Gastrocnemius medialis (tissue), 4 donors: ENCODE measurements at regions of chr19 and their contacts with region 1.

Region 1: DNA sequence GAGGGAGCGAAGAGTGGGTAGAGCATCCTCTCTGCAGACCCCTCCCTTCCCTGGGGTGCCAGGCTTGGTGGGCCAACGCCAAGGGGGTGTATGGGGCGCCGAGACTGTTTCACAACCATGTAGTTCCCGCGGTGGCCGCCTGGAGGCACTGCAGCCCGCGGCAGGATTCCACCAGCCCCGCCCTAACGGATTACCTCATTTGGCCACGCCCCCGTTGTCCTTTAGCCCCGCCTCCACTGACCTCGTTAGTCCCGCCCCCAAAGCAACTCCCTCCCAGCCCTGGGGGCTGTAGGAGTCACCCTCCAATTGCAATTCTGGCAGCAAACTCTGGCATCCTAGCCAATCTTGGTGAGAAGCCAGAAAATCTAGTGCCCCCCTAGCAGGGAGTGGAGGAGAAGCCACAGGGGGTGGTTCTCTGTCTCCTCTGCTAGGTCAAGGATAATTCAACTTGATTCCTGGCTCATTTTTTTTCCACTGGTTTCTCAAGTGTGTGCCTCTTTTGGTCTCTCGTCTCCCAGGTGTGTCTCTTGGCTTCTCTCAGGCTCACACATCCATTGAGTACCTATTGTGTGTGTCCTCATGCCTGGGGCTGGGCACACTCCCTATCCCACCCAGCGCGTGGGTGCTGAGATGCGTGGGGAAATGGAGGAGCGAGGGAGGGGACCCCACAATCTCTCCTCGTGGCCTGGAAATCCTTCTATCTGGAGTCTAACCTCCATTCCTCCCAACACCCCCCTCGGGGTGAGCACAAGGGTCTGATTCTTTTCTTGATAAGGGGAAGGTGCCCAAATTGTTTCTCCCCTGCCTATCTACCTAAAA is 2.0 kb downstream of the OLFM2 start:
- DNase-seq: peak; percentile 32 to 46
- ATAC-seq: peak; percentile 62 to 69
- H3K4me3 ChIP-seq: no peak overlapping the region
- H3K27ac ChIP-seq: no peak overlapping the region
- H3K4me1 ChIP-seq: peaks cover 3 to 15% of the 10 kb centered on the region in 2 donors
- H3K27me3 ChIP-seq: peaks cover 21 to 37% (median 34%) of the 10 kb centered on the region in 3 donors
- CTCF ChIP-seq: peak; percentile 66 to 76 (median 70)
- POLR2A ChIP-seq: no peak

Region 2: DNA sequence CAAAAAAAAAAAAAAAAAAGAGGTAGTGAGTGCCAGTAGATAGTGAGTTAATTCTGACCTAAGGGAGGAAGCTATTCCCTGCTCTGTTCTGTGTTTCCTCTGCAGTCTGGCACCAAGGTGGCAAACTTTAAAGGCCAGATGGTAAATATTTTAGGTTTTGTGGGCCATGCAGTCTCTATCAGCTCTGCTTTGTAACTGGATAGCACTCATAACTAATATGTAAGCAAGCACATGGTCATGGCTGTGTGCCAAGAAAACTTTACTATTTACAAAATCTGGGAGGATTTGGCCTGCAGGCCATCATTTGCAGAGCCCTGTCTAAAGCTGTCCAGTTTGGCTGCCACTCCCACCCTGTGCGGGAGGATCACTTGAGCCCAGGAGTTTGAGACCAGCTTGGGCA is 94.9 kb before region 1 on chr19:
- in situ Hi-C with region 1: no loop called
- intact Hi-C with region 1: no loop called
- DNase-seq: no peak
- ATAC-seq: no peak
- H3K4me3 ChIP-seq: no peak overlapping the region
- H3K27ac ChIP-seq: no peak overlapping the region
- H3K4me1 ChIP-seq: peaks cover 12 to 16% of the 10 kb centered on the region in 2 donors
- H3K27me3 ChIP-seq: no peaks in the 10 kb centered on the region
- CTCF ChIP-seq: no peak
- POLR2A ChIP-seq: no peak

Region 3: GRCh38 chr19:10000171-10000826 is 66.0 kb after region 1 on chr19:
- in situ Hi-C with region 1: no loop called
- intact Hi-C with region 1: loop called (anchors 2 kb)
- DNase-seq: peak; percentile 17 to 25
- ATAC-seq: no peak
- H3K4me3 ChIP-seq: no peak overlapping the region
- H3K27ac ChIP-seq: peak overlapping the region in 1 of 4 donors; percentile 14
- H3K4me1 ChIP-seq: no peaks in the 10 kb centered on the region
- H3K27me3 ChIP-seq: no peaks in the 10 kb centered on the region
- CTCF ChIP-seq: peak; percentile 9 to 60 (median 30)
- POLR2A ChIP-seq: no peak

Region 4: DNA sequence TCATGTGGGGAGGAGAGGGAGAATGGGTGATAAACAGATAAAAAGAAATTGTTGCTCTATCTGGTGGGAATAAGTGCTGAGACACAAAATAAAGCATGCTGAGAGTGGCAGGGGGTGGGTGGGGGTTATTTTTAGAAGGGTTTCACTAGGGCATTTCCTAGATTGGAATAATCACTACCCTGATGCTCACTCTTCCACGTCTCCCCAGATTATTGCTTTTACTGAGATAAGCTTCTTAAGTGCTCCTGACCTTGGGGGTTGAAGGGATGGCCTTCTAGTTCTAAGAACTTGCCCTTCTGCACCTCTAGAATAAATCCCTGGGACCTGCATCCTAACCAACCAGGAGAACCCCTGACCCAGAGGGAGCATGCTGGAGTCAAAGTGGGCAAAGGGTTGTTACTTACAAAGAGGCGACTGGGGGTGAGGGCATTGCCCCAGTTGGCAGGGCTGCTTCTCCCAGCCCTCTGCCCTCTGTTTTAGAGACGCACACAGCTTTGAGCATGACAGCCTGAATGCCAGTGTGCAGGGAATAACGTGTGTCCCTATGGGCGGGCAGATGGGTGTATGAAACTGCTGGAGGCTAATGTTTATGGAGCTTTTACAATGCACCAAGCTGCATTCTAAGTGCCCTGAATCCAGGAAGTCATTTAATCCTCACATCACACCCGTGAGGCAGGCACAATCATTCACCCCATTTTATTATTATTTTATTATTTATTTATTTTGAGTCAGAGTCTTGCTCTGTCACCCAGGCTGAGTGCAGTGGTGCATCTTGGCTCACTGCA is 79.7 kb after region 1 on chr19:
- in situ Hi-C with region 1: no loop called
- intact Hi-C with region 1: no loop called
- DNase-seq: no peak
- ATAC-seq: no peak
- H3K4me3 ChIP-seq: no peak overlapping the region
- H3K27ac ChIP-seq: no peak overlapping the region
- H3K4me1 ChIP-seq: no peaks in the 10 kb centered on the region
- H3K27me3 ChIP-seq: peaks cover 0 to 20% (median 20%) of the 10 kb centered on the region in 3 donors
- CTCF ChIP-seq: no peak
- POLR2A ChIP-seq: no peak

Region 5: DNA sequence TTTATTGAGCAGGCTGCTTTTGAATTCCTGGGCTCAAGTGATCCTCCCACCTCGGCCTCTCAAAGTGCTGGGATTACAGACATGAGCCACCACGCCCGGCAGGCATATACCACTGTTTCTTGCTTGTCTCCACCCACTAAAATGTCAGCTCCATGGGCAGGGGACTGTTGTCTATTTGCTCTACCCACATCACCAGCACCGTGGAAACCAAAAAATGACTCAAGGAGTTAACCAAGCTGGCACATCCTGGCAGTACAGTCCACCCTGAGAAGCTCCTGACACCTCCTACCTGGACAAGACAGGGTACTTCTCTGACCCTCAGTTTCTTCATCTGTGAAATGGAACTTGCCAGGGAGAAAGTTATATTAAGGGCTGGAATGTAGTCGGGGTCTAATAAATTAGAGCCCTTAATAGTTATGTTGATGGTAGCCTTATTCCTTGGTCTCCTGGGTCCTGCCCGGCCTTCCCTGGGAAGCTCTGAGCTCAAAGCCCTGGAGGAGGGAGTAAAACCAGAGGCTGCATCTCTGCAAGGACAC is 92.9 kb after region 1 on chr19:
- in situ Hi-C with region 1: loop called in 1 of 4 experiments (anchors 5 kb)
- intact Hi-C with region 1: loop called (anchors 1 kb)
- DNase-seq: no peak
- ATAC-seq: no peak
- H3K4me3 ChIP-seq: no peak overlapping the region
- H3K27ac ChIP-seq: no peak overlapping the region
- H3K4me1 ChIP-seq: no peaks in the 10 kb centered on the region
- H3K27me3 ChIP-seq: peaks cover 0 to 3% (median 0%) of the 10 kb centered on the region in 3 donors
- CTCF ChIP-seq: no peak
- POLR2A ChIP-seq: no peak

Region 6: DNA sequence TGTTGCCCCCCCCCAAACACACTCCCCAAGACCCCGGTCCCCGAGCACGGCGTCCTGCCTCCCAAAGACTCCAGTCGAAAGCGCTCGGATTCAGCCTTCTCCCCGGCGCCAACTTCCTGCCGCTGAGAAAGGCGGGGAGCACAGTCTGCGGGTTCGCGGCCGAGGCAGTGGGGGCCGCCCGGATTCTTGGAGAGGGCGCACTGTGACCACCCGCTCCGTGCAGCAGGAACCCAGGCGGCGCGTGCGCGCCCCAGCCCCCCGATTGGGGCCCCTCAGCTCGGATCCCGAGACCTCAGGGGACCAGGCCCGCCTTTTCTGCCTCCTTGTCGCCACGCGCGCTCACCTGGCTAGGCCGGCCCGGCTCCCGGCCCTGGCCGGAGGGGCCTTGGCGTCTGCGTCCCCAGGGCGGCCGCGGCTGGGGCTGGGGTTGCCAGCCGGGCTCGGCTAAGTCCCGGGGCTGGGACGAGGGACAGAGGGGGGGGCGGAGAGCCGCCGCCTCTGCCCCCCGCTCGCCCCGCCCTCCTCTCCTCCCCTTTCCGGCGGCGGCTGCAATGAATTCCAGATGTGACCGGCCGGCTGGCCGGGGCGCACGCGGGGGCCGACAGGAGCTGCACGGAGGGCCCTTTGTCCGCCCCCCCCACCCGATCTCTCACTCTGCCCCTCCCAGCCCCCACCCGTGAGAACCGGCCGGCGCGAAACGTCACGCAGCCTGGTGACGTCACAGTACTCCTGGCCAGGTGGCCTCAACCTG is 296.7 kb after region 1 on chr19 and contains the start of gene S1PR2:
- in situ Hi-C with region 1: loop called in 2 of 4 experiments (anchors 25 kb)
- intact Hi-C with region 1: no loop called
- DNase-seq: peak; percentile 20 to 38
- ATAC-seq: peak in 1 of 2 donors; percentile 25
- H3K4me3 ChIP-seq: peak within 1 kb of the TSS; percentile 69 to 87 (median 76)
- H3K27ac ChIP-seq: peak within 1 kb of the TSS; percentile 70 to 84 (median 79)
- H3K4me1 ChIP-seq: peaks cover 3 to 13% of the 10 kb centered on the region in 2 donors
- H3K27me3 ChIP-seq: peaks cover 8 to 25% (median 19%) of the 10 kb centered on the region in 3 donors
- CTCF ChIP-seq: no peak
- POLR2A ChIP-seq: peak in 1 of 2 donors; percentile 6
- total RNA-seq, gene S1PR2: 0.56 to 2.2 (median 1.1) TPM

Region 7: DNA sequence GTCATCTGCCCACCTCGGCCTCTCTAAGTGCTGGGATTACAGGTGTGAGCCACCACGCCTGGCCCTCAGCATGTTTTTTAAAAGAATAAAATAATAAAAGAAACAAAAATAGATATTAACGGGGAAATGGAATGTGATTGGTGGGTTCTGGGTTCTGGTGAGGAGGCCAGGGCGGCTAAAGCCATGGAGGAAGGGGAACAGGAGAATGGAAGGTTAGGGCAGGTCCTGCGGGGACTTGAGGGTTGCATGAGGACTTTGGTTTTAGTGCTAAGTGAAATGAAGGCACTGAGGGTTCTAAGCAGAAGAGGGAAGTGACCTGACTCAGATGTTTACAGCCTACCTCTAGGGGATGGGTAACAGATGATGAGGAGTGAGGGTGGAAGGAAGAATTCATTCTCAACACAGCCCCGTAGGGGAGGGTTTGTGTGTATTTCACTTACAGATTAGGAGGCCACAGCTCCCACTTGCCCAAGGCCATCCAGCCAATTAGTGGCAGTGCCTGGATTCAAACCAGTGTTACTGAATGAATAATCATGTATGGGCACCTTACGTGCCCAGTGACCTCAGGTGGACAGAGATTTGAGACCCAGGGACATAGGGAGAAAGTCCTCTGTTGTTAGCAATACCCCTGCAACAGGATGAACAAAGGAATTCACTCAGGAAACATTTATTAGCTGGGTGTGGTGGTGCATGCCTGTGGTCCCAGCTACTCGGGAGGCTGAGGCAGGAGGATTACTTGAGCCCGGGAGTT is 311.0 kb after region 1 on chr19:
- in situ Hi-C with region 1: loop called (anchors 10 to 25 kb)
- intact Hi-C with region 1: loop called (anchors 10 kb)
- DNase-seq: no peak
- ATAC-seq: no peak
- H3K4me3 ChIP-seq: no peak overlapping the region
- H3K27ac ChIP-seq: no peak overlapping the region
- H3K4me1 ChIP-seq: no peaks in the 10 kb centered on the region
- H3K27me3 ChIP-seq: no peaks in the 10 kb centered on the region
- CTCF ChIP-seq: no peak
- POLR2A ChIP-seq: no peak

Region 8: GRCh38 chr19:10353793-10354391 is 419.6 kb after region 1 on chr19:
- in situ Hi-C with region 1: no loop called
- intact Hi-C with region 1: no loop called
- DNase-seq: peak in 1 of 2 donors; percentile 42
- ATAC-seq: peak in 1 of 2 donors; percentile 49
- H3K4me3 ChIP-seq: peak overlapping the region in 2 of 4 donors; percentile 15 to 33
- H3K27ac ChIP-seq: peak overlapping the region in 2 of 4 donors; percentile 11 to 34
- H3K4me1 ChIP-seq: no peaks in the 10 kb centered on the region
- H3K27me3 ChIP-seq: no peaks in the 10 kb centered on the region
- CTCF ChIP-seq: no peak
- POLR2A ChIP-seq: no peak

Region 9: DNA sequence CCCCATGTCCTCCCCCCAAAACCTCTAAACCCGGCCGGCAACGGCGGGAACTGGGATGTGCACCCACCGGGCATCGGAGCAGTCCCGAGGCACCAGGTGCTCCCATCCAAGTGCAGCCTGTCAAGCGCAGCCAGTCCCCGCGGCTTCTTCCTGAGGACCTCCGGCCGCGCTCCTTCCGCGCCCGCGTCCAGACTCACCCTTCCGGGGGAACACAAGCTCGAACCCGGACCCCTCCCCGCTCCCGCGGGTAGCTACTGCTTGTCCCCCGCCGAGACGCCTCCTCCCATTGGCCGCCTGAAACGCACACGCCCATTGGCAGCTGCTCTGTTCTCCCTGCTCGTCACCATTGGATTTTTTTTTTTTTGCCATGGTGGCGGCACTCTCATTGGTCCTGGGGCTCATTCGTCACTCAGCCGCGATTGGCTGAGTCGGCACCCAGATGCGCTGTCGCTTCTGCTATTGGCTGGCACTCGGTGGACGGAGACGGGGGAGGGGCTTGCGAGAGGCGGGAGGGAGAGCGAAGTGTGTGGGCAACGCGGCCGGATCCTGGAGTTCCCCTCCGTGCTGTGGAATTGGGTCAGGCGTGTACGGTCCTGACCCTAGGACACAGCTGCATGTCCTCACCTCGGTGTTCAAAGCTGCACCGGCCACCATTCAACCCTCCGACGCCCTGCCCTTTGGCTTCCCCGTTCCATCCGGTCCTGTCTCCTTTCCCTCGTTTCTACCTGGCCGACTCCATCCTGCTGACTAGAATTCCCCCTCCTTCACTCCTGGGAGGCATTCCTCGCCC is 446.2 kb after region 1 on chr19 and contains the start of gene TYK2:
- in situ Hi-C with region 1: loop called (anchors 10 to 25 kb)
- intact Hi-C with region 1: no loop called
- DNase-seq: peak; percentile 96 to 98
- ATAC-seq: peak; percentile 99 to 100
- H3K4me3 ChIP-seq: peak within 1 kb of the TSS; percentile 90 to 98 (median 95)
- H3K27ac ChIP-seq: peak within 1 kb of the TSS; percentile 82 to 92 (median 82)
- H3K4me1 ChIP-seq: peaks cover 10 to 14% of the 10 kb centered on the region in 2 donors
- H3K27me3 ChIP-seq: no peaks in the 10 kb centered on the region
- CTCF ChIP-seq: no peak
- POLR2A ChIP-seq: peak; percentile 40 to 53
- total RNA-seq, gene TYK2: 32.6 to 58.5 (median 50.9) TPM

Region 10: GRCh38 chr19:10388957-10389356 is 454.6 kb after region 1 on chr19:
- in situ Hi-C with region 1: loop called (anchors 10 to 25 kb)
- intact Hi-C with region 1: loop called (anchors 2 kb)
- DNase-seq: peak; percentile 64 to 77
- ATAC-seq: peak; percentile 72 to 73
- H3K4me3 ChIP-seq: no peak overlapping the region
- H3K27ac ChIP-seq: no peak overlapping the region
- H3K4me1 ChIP-seq: peaks cover 0 to 7% of the 10 kb centered on the region in 2 donors
- H3K27me3 ChIP-seq: no peaks in the 10 kb centered on the region
- CTCF ChIP-seq: peak; percentile 87 to 96 (median 92)
- POLR2A ChIP-seq: no peak